ENCODE measurements at regions of chr5 and their contacts with region 1.

Region 1: DNA sequence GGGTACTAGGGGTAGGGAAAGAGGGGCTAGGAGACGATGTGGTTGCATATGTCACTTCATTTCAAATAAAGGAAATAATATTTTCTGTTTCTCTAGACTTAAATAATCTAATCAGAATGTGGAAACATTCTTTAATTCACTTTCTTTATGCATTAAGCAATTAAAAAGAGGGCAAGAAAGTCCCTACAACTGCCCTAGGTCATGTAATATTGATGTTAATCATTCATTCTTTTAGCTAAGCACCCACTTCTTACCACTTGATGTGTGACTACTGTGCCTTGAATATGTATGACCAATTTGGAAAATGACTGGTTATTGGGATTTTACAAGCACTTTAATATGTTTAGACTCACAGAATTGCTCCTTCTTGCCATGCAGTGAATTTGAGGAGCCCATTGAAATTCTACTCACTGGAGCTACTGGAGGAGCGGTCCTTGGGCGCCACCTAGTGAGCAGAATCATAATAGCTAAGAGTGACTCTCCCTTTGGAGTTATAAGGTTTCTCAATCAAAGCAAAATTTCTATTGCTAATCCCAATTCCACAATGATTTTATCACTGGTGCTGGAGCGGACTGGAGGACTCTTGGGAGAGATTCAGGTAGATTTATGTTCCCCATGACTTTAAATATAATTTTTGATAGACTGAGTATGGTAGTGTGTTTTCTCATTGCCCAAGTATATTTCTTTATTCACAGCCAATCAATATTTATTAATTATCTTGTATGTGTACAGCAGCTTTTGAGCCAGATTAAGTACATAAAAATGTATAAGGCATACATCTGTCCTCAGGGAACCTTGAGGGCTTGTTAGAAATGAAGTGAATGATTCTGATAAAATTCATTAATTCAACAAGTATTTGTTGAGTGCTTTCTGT is 225.1 kb downstream of the ADGRV1 start:
- DNase-seq: peak; percentile 16
- H3K4me3 ChIP-seq: no peak overlapping the region
- CTCF ChIP-seq: peak; percentile 83

Region 2: GRCh38 chr5:90529939-90530677 is 253.6 kb before region 1 on chr5:
- CTCF ChIA-PET with region 1: no interaction called
- POLR2A ChIA-PET with region 1: no interaction called
- DNase-seq: peak; percentile 38
- H3K4me3 ChIP-seq: peak overlapping the region; percentile 96
- CTCF ChIP-seq: peak; percentile 73

Region 3: GRCh38 chr5:90696153-90696552 is 87.5 kb before region 1 on chr5:
- CTCF ChIA-PET with region 1: no interaction called
- POLR2A ChIA-PET with region 1: no interaction called
- DNase-seq: no peak
- H3K4me3 ChIP-seq: no peak overlapping the region
- CTCF ChIP-seq: no peak

Region 4: DNA sequence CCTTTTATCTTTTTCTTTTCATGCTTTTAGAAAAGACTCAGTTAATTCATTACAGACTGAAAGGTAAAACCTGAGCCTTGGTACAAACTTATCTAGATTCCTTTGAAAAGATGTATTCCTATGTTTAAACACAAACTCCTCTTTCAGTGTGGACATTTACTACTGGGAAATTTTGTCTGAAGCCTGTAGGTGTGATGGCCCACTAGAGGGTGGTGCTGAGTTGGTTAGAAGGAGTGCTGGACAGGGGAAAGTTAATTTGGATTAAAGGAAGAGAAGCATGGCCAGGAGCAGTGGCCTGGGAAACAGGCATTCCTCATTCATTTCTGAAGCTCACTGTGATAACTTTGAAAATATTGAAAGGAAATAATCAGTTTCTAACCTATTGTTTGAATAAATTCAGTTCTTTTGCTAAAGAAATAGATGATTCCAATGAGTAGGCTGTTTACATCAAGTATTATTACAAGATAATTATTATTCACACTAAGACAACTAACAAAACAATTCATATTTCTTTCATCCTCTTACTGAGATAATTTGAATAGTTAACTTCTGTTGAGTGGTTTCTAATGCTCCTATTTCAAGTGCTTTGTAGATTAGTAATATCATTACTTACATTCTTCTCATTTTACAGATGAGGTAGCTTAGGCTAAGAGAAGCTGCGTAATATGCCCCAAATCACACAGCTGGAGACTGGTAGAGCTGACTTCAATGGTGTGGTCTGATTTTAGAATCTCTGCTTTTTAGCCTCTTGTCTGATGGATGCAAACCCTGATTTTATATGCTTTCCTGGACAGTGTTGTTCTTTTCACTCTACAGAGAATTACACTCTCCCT is 74.2 kb before region 1 on chr5:
- CTCF ChIA-PET with region 1: interaction called, 19 read pairs
- POLR2A ChIA-PET with region 1: no interaction called
- DNase-seq: no peak
- H3K4me3 ChIP-seq: no peak overlapping the region
- CTCF ChIP-seq: peak; percentile 65